Vagina (tissue), 2 donors: ENCODE measurements at regions of chr18 and their contacts with region 1.

Region 1: DNA sequence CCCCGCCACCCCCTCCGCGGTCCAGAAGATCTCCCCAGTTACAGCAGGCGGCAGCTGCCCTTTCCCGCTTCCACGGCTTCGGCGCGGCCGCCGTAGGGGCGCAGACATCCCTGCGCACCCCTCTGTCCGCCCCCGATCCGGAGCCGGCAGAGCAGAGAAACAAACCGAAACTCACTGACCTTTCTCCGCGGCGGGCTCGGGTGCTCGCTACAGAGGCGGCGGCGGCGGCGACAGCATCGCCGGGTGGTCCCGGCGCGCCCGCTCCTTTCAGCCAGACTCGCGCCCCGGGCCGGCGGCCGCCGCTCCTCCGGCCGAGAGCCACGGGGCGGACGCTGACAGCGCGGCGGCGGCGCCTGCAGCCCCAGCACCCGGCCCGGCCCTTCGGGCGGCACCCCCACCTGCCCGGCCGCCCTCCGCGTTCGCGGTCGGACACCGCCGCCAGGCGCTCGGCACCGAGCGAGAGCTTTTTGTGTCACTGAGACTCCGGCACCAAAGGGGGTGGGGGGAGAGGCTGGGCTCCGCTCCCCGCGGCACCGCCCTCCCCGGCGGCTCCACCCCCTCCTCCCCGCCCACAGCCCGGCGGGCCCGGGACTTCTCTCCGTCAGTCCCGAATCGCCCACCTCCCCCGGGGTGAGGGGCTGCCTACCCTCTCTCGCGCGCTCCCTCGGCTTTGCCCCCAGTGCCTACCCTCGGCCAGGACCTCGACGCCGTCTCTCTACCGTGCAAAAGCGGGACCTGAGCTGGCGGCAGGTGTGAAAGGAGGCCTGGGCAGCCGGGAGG is 1.4 kb upstream of the RNF152 start:
- DNase-seq: no peak
- H3K4me3 ChIP-seq: peak overlapping the region; percentile 75 to 93
- H3K27ac ChIP-seq: peak overlapping the region; percentile 92
- H3K4me1 ChIP-seq: peaks cover 47% of the 10 kb centered on the region
- H3K27me3 ChIP-seq: no peaks in the 10 kb centered on the region
- CTCF ChIP-seq: no peak
- POLR2A ChIP-seq: peak in 1 of 2 donors; percentile 49

Region 2: GRCh38 chr18:61581578-61582201 is 312.5 kb before region 1 on chr18:
- intact Hi-C with region 1: loop called (anchors 2 kb)
- DNase-seq: no peak
- H3K4me3 ChIP-seq: peak overlapping the region; percentile 36 to 38
- H3K27ac ChIP-seq: peak overlapping the region; percentile 40
- H3K4me1 ChIP-seq: peaks cover 14% of the 10 kb centered on the region
- H3K27me3 ChIP-seq: no peaks in the 10 kb centered on the region
- CTCF ChIP-seq: peak; percentile 75 to 97 (median 95)
- POLR2A ChIP-seq: no peak

Region 3: GRCh38 chr18:61635901-61636528 is 258.1 kb before region 1 on chr18:
- intact Hi-C with region 1: loop called (anchors 5 kb)
- DNase-seq: no peak
- H3K4me3 ChIP-seq: no peak overlapping the region
- H3K27ac ChIP-seq: no peak overlapping the region
- H3K4me1 ChIP-seq: peaks cover 21% of the 10 kb centered on the region
- H3K27me3 ChIP-seq: no peaks in the 10 kb centered on the region
- CTCF ChIP-seq: peak in 2 of 3 experiments; percentile 17 to 68
- POLR2A ChIP-seq: no peak

Region 4: DNA sequence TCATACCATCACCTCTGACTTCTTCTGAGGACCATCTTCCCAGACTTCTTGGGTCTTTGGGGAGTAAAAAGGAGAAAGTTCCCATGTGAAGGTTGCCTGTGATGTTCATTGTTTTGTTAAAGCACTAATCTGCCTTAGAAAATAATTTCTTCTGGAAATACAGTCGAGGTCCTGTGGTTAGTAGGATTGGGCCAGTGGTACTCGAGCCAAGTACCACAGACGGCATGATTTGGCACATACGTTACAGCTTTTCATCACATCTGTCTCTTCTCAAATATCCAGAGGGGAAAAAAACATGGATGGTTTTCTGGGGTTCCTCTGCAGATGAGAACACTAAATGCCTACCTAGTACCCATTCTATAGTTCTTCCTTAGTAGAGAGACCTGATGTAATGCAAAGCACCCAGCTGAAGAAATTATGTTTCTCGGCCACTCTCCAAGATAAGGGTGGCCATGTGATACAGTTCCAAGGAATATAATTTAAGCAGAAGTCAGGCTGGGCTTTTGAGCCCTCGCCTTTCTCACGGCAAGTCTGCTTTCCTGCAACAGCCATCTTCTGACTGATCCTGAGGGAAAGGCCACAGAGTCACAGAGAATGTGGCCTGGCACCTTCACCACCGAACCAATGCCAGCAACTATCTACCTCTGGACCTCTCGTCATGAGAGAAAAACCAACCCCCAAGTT is 162.3 kb before region 1 on chr18:
- intact Hi-C with region 1: loop called (anchors 5 kb)
- DNase-seq: no peak
- H3K4me3 ChIP-seq: no peak overlapping the region
- H3K27ac ChIP-seq: peak overlapping the region; percentile 72
- H3K4me1 ChIP-seq: peaks cover 27% of the 10 kb centered on the region
- H3K27me3 ChIP-seq: no peaks in the 10 kb centered on the region
- CTCF ChIP-seq: no peak
- POLR2A ChIP-seq: no peak